CD14-positive monocyte (primary cell): ENCODE measurements at regions of chr1 and their contacts with region 1.

Region 1: GRCh38 chr1:207499573-207499972 is 3.6 kb downstream of the CR1 start:
- DNase-seq: peak; percentile 56 to 76 (median 75)
- H3K4me3 ChIP-seq: no peak overlapping the region
- H3K4me3 Mint-ChIP-seq: no peak overlapping the region
- H3K27ac ChIP-seq: no peak overlapping the region
- H3K27ac Mint-ChIP-seq: peak overlapping the region in 2 of 7 donors; percentile 25 to 66
- H3K4me1 ChIP-seq: peaks cover 36 to 41% of the 10 kb centered on the region in 2 donors
- H3K4me1 Mint-ChIP-seq: peaks cover 36% of the 10 kb centered on the region
- H3K27me3 ChIP-seq: no peaks in the 10 kb centered on the region
- H3K27me3 Mint-ChIP-seq: peaks cover 2 to 5% (median 4%) of the 10 kb centered on the region in 3 donors
- CTCF ChIP-seq: peak; percentile 90

Region 2: DNA sequence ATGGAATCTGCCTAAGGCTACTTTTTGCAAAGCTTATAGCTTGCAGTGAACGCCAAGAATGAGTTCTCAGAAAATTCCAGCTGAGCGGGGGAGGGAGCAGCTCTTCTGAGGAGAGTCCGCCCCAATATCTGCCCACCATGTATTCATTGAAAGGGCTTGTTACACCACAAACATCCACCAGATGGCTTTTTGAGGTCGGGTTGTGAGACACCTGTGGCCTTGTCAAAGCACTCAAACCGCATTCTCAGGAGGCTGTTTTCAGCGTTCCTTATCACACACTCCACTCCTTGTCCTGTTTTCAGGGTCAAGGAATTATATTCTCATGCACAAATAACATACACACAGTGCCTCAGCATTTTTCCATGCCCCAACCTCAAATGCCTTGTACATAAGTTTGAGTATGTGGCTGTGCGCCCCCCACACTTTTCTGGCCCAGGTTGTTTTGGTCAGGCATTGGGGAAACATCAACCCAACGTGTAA is 414.8 kb before region 1 on chr1:
- intact Hi-C with region 1: loop called in 1 of 2 experiments (anchors 5 kb)
- DNase-seq: peak; percentile 44 to 65 (median 60)
- H3K4me3 ChIP-seq: no peak overlapping the region
- H3K4me3 Mint-ChIP-seq: no peak overlapping the region
- H3K27ac ChIP-seq: no peak overlapping the region
- H3K27ac Mint-ChIP-seq: peak overlapping the region in 2 of 7 donors; percentile 8 to 19
- H3K4me1 ChIP-seq: peaks cover 0 to 10% of the 10 kb centered on the region in 2 donors
- H3K4me1 Mint-ChIP-seq: peaks cover 16% of the 10 kb centered on the region
- H3K27me3 ChIP-seq: peaks cover 0 to 2% of the 10 kb centered on the region in 2 donors
- H3K27me3 Mint-ChIP-seq: peaks cover 3 to 6% (median 3%) of the 10 kb centered on the region in 3 donors
- CTCF ChIP-seq: peak; percentile 71

Region 3: DNA sequence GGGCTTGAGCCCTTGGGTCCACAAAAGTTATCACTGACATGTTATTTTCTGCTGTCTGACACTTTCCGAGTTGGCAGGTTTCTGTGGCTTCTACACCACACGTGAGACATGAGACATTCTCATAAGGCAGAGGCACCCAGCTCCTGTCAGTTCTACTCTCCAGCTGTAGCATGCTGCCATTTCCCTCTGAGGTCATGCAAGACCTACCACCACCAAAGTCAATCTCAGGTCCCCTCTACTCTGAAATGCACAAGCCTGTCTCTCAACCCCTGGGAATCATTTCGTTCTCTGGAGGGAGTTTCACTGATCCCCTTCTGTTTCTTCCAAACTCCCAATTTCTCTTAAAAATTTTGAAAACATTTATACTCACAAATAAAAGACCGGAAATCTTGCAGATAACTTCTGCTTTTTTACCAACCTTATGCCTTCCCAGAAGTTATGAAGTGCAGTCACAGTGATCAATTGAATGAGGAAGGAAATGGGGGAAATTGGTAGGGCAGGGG is 84.9 kb before region 1 on chr1:
- intact Hi-C with region 1: loop called in 1 of 2 experiments (anchors 5 kb)
- DNase-seq: peak; percentile 41 to 63 (median 62)
- H3K4me3 ChIP-seq: peak overlapping the region in 2 of 3 experiments; percentile 16 to 62
- H3K4me3 Mint-ChIP-seq: peak overlapping the region; percentile 44 to 78
- H3K27ac ChIP-seq: peak overlapping the region; percentile 49 to 75
- H3K27ac Mint-ChIP-seq: peak overlapping the region; percentile 74 to 94 (median 91)
- H3K4me1 ChIP-seq: peaks cover 68 to 73% of the 10 kb centered on the region in 2 donors
- H3K4me1 Mint-ChIP-seq: peaks cover 70% of the 10 kb centered on the region
- H3K27me3 ChIP-seq: no peaks in the 10 kb centered on the region
- H3K27me3 Mint-ChIP-seq: peaks cover 0 to 5% (median 2%) of the 10 kb centered on the region in 3 donors
- CTCF ChIP-seq: no peak

Region 4: GRCh38 chr1:207429963-207430362 is 69.6 kb before region 1 on chr1:
- intact Hi-C with region 1: no loop called
- DNase-seq: no peak
- H3K4me3 ChIP-seq: no peak overlapping the region
- H3K4me3 Mint-ChIP-seq: no peak overlapping the region
- H3K27ac ChIP-seq: no peak overlapping the region
- H3K27ac Mint-ChIP-seq: no peak overlapping the region
- H3K4me1 ChIP-seq: no peaks in the 10 kb centered on the region
- H3K4me1 Mint-ChIP-seq: peaks cover 14% of the 10 kb centered on the region
- H3K27me3 ChIP-seq: no peaks in the 10 kb centered on the region
- H3K27me3 Mint-ChIP-seq: peaks cover 0 to 2% (median 0%) of the 10 kb centered on the region in 3 donors
- CTCF ChIP-seq: no peak